CD8-positive, alpha-beta T cell (primary cell): ENCODE measurements at regions of chr7 and their contacts with region 1.

Region 1: DNA sequence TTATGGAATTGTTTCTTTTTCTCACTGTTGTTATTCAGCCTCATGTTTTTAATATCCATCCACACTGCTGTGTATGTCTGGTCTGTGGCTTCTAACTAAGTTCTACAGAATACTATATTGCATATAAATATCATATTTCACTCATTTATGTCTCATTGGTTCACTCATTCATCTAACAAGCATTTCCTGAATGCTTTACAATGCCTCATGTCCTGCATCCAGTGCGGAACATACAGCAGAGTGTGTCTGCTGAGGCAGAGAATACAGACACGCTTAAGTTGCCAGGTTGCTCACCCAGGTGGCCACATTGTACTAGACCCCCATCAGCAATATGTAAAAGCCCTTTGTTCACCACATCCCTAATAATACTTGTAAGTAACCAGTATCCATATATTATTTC is 111.8 kb upstream of the CNTNAP2 start:
- DNase-seq: no peak
- ATAC-seq: no peak
- H3K4me3 ChIP-seq: no peak overlapping the region
- H3K4me3 Mint-ChIP-seq: no peak overlapping the region
- H3K27ac ChIP-seq: no peak overlapping the region
- H3K27ac Mint-ChIP-seq: no peak overlapping the region
- H3K4me1 ChIP-seq: no peaks in the 10 kb centered on the region
- H3K4me1 Mint-ChIP-seq: no peaks in the 10 kb centered on the region
- H3K27me3 ChIP-seq: no peaks in the 10 kb centered on the region
- H3K27me3 Mint-ChIP-seq: no peaks in the 10 kb centered on the region
- CTCF ChIP-seq: no peak

Region 2: DNA sequence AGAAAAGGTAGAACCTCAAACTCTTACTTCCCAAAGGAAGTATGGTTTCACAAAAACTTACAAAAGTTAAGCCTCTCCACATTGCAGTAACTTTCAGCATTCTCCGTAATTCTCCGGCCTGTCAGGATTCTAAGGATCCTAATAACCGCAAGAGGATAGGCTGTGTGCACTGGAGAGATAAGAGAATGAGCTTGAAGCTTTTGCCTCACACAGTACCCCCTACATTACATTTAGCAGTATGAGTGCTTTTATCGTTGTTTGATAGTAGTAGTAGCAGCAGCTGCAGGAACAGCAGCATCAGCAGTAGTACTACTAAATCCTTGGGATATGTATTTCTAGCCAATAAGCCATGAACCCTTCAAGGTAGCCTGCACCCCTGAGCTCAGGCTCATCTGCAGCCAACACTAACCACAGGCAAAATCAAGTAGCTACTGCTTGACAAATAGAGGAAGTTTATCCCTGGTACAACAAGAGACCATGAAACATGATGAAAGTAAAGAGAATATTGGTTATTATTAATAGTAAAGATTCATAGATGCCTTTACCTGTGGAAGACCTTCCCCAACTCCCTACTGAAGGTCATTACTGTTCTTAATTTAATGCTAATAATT is 110.8 kb before region 1 on chr7:
- CTCF ChIA-PET with region 1: no interaction called
- POLR2A ChIA-PET with region 1: no interaction called
- intact Hi-C with region 1: loop called in 1 of 2 experiments (anchors 5 kb)
- DNase-seq: no peak
- ATAC-seq: no peak
- H3K4me3 ChIP-seq: no peak overlapping the region
- H3K4me3 Mint-ChIP-seq: no peak overlapping the region
- H3K27ac ChIP-seq: no peak overlapping the region
- H3K27ac Mint-ChIP-seq: no peak overlapping the region
- H3K4me1 ChIP-seq: no peaks in the 10 kb centered on the region
- H3K4me1 Mint-ChIP-seq: no peaks in the 10 kb centered on the region
- H3K27me3 ChIP-seq: no peaks in the 10 kb centered on the region
- H3K27me3 Mint-ChIP-seq: no peaks in the 10 kb centered on the region
- CTCF ChIP-seq: no peak

Region 3: DNA sequence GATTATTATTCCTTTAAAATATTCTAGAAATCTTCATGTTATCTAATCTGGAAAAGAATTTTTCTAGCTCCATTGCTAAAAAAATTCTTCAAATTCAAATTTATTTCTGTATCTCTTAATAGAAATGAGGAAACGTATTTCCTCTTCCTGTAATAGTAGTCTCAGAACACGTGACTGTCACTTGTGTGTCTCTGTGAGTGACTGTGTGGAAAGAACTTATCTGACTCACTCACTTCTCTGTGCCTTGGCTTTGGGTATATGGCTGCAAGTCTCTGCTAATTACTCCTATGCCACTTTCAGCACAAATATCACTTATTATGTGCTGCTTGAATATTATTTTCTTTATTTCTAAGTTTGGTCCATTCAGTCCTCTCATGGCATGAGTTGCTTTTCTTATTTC is 244.5 kb after region 1 on chr7:
- CTCF ChIA-PET with region 1: no interaction called
- POLR2A ChIA-PET with region 1: no interaction called
- intact Hi-C with region 1: no loop called
- DNase-seq: no peak
- ATAC-seq: no peak
- H3K4me3 ChIP-seq: no peak overlapping the region
- H3K4me3 Mint-ChIP-seq: no peak overlapping the region
- H3K27ac ChIP-seq: no peak overlapping the region
- H3K27ac Mint-ChIP-seq: no peak overlapping the region
- H3K4me1 ChIP-seq: no peaks in the 10 kb centered on the region
- H3K4me1 Mint-ChIP-seq: no peaks in the 10 kb centered on the region
- H3K27me3 ChIP-seq: no peaks in the 10 kb centered on the region
- H3K27me3 Mint-ChIP-seq: no peaks in the 10 kb centered on the region
- CTCF ChIP-seq: no peak